ENCODE measurements at regions of chr15 and their contacts with region 1.

Region 1: DNA sequence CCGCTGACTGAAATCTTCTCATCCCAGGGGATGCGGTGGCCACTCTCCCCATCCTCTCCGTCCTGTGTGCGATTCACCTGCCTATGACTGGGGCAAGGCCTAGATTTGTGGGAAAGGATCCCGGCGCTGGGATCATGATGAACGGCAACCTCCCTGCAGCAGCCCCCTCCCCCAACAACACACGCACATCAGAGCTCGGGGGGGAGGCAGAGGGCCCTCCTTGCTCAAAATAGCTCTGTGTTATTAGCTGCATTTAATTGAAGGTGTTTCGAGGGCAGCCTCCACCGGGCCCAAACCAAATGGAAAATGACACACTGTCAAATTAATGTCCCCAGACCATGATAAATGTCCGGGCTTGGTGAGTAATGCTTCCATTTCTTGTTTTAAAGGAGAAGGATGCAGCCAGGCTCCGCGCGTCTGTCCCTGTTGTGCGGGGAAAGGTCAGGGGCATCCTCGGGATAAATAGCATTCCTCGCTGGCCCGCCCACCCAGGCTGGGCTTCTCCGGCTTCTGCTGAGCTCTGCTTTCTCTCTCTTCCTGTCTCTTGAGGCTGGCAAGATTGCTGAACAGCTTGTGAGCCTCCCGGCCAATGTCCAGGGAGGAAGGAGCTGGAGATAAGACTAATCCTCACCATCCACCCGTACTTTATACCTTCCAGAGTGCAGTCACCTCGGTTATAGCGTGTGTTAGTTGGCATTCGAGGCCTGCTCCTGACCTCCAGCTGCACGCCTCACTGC is 56.4 kb upstream of the TLE3 start:
- DNase-seq: no peak
- CTCF ChIP-seq: no peak

Region 2: GRCh38 chr15:70097337-70098169 is 56.6 kb before region 1 on chr15 and contains the start of gene TLE3:
- CTCF ChIA-PET with region 1: no interaction called
- POLR2A ChIA-PET with region 1: no interaction called
- DNase-seq: peak; percentile 99
- CTCF ChIP-seq: peak; percentile 59

Region 3: DNA sequence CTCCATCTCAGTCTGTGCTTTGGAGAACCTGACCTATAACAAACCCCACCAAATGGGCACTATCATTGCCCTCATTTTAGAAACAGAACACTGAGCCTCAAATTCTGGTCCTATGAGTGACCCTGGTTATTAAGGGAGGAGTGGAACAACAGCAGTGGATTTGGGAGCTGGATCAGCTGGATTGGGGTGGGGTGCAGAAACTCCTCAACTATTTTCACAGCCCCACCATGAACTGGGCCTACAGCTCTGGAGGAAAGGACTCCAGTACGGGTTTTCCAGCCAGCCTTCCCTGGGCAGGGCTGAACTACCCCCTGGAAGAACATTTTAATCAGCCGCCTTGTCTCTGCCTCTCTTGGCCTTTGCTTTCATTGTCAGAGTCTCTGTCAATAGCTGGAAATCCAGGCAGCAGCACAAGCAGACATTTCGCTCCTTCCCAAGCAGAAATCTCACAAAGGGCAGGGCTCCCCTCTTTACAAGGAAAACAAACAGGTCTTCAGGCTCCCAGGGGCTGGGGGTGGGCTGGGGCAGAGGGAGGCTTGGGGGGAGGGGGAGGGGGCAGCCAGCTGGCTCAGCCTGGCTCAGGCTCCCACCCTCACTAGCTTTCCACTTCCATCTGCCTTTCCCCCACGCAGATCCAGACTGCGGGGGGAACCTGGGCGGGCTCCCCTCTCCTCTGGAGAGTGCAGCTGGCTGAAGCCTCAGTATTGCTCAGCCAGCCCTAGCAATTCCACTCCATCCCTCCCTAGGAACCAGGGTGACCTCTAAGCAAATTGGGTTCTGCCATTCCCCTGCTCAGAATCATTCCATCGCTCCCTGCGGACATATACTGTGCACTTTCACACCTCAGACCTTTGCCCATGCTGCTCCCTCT is 42.7 kb before region 1 on chr15:
- CTCF ChIA-PET with region 1: no interaction called
- POLR2A ChIA-PET with region 1: no interaction called
- DNase-seq: no peak
- CTCF ChIP-seq: no peak

Region 4: DNA sequence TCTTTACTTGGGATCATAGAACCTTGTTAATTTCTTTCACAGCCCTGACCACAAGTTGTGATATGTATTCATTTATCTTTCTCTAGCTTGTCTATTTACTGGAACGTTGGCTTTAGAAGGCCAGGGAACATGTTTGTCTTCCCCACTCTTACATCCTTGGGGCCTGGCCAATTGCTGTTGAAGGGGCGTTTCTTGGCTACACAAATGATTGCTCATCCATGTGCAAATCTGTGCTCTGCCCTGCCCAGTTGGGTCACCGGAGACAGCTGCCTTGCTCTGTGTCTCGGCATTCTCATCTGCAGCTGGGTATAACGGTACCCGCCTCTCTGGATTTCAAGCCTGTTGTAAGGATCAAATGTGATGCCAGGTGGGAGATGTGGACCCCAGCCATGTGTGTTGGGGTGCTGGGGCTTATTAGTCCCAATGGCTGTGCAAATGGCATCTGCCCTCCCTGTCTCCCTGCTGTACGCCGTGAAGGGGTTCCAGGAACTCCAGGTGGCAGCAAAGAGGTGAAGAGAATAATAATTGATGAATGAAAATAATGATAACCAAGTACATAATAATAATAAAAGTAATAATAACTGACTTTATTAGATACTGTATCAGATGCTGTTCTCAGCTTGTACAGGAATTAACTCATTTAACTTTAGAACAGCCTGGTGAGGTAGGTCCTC is 32.4 kb before region 1 on chr15:
- CTCF ChIA-PET with region 1: no interaction called
- POLR2A ChIA-PET with region 1: no interaction called
- DNase-seq: no peak
- CTCF ChIP-seq: peak; percentile 23

Region 5: GRCh38 chr15:70140543-70141375 is 13.4 kb before region 1 on chr15:
- CTCF ChIA-PET with region 1: interaction called, 16 read pairs
- POLR2A ChIA-PET with region 1: no interaction called
- DNase-seq: peak; percentile 59
- CTCF ChIP-seq: no peak

Region 6: DNA sequence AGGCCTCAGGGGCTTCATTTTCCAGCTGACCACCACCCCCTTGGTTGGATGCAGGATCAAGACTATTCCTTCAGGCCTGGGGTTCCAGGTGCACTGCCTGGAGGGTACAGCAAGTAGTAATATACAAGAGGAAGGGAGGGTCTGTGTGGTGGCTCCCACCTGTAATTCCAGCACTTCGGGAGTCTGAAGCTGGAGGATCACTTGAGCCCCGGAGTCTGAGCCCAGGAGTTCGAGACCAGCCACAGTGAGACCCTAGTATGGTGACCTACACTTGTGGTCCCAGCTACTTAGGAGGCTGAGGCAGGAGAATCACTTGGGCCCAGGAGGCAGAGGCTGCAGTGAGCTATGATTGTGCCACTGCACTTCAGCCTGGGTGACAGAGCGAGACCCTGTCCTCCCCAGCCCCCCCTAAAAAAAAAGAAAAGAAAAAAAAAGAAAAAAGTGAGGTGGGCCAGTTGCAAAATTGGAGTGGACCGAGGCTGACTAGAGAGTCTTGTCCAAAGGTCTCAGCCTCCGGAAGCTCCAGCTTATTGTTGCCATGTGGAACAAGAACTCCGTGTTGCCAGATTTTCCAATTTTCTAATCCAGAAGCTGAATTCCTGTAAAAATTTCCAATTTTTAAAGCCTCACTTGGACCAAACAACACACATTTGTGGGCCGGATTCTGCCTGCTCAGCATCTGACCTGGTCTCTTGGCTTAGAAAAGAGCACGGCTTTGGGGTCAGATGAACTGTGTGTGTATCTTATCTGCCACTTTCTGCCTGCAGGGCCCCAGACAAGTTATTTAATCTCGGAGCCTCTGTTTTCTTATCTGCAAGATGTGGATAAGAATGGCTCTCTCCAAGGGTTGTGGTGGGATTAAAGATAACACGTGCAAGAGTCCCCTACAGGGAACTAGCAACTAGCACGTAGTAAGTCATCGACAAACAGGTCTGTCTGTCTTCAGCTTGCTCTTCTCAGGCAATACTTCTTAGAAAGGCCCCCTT is 17.0 kb after region 1 on chr15:
- CTCF ChIA-PET with region 1: interaction called, 11 read pairs
- POLR2A ChIA-PET with region 1: no interaction called
- DNase-seq: no peak
- CTCF ChIP-seq: no peak

Measured in GM10248 (cell line).